ENCODE measurements at regions of chrX and their contacts with region 1.

Region 1: GRCh38 chrX:11641349-11642065 is 24.2 kb downstream of the ARHGAP6 start:
- DNase-seq: no peak
- ATAC-seq: no peak
- H3K4me3 ChIP-seq: no peak overlapping the region
- H3K27ac ChIP-seq: no peak overlapping the region
- H3K4me1 ChIP-seq: no peaks in the 10 kb centered on the region
- H3K27me3 ChIP-seq: peaks cover 0 to 8% (median 0%) of the 10 kb centered on the region in 7 donors
- CTCF ChIP-seq: no peak

Region 2: DNA sequence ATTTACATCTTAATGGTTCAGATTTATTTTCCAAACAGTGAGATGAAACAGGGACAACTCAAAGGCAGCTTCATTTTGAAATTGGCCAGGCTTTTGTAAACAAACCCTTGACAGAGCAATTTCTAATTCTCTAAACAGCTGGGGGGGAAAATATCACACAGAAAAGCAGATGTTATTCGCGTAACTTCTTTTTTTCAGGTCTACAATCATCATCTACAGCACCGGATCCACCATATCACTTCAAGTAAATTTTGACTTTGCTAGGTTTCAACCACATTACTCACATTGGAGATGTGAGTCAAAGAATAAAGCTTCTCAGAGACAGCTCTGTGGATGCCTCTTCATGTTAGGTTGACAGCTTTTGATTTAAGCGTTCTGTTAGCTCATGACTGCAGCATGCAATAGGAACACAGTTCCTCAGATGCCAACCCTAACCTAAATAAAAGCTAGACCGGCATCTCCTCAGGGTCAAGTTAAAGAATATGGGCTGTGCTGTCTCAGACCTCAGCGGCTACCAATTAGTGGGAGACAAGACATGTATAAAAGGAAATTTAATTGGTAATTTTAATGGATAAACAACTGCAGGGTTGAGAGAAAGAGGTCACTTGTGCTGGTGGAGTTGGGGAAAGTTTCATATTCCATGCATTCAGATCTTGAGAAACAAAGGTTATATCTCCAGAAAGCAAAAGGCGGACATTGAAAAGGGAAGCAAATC is 321.5 kb before region 1 on chrX:
- intact Hi-C with region 1: no loop called
- DNase-seq: no peak
- ATAC-seq: no peak
- H3K4me3 ChIP-seq: no peak overlapping the region
- H3K27ac ChIP-seq: no peak overlapping the region
- H3K4me1 ChIP-seq: no peaks in the 10 kb centered on the region
- H3K27me3 ChIP-seq: no peaks in the 10 kb centered on the region
- CTCF ChIP-seq: no peak

Region 3: GRCh38 chrX:11678158-11678557 is 36.7 kb after region 1 on chrX:
- intact Hi-C with region 1: loop called in 1 of 10 experiments (anchors 2 kb)
- DNase-seq: no peak
- ATAC-seq: no peak
- H3K4me3 ChIP-seq: no peak overlapping the region
- H3K27ac ChIP-seq: no peak overlapping the region
- H3K4me1 ChIP-seq: no peaks in the 10 kb centered on the region
- H3K27me3 ChIP-seq: peaks cover 0 to 3% (median 0%) of the 10 kb centered on the region in 7 donors
- CTCF ChIP-seq: no peak

Measured in heart right ventricle (tissue), 16 donors.